Heart left ventricle (tissue), 16 donors: ENCODE measurements at regions of chr4 and their contacts with region 1.

Region 1: GRCh38 chr4:106502106-106502699 is 133.6 kb upstream of the GIMD1 start:
- DNase-seq: peak in 4 of 5 donors; percentile 27 to 46 (median 41)
- ATAC-seq: peak in 3 of 4 donors; percentile 62 to 69 (median 65)
- H3K4me3 ChIP-seq: no peak overlapping the region
- H3K27ac ChIP-seq: no peak overlapping the region
- H3K4me1 ChIP-seq: no peaks in the 10 kb centered on the region
- H3K27me3 ChIP-seq: peaks cover 0 to 5% (median 0%) of the 10 kb centered on the region in 9 donors
- CTCF ChIP-seq: peak; percentile 45 to 74 (median 58)
- POLR2A ChIP-seq: no peak

Region 2: GRCh38 chr4:106266201-106266600 is 236.0 kb before region 1 on chr4:
- intact Hi-C with region 1: loop called in 6 of 10 experiments (anchors 2 to 10 kb)
- DNase-seq: no peak
- ATAC-seq: no peak
- H3K4me3 ChIP-seq: no peak overlapping the region
- H3K27ac ChIP-seq: no peak overlapping the region
- H3K4me1 ChIP-seq: peaks cover 0 to 8% (median 0%) of the 10 kb centered on the region in 12 donors
- H3K27me3 ChIP-seq: no peaks in the 10 kb centered on the region
- CTCF ChIP-seq: peak; percentile 19 to 63 (median 36)
- POLR2A ChIP-seq: no peak

Region 3: GRCh38 chr4:106329041-106329618 is 173.1 kb before region 1 on chr4:
- intact Hi-C with region 1: loop called in 3 of 10 experiments (anchors 5 kb)
- DNase-seq: no peak
- ATAC-seq: peak; percentile 58 to 73 (median 66)
- H3K4me3 ChIP-seq: no peak overlapping the region
- H3K27ac ChIP-seq: no peak overlapping the region
- H3K4me1 ChIP-seq: peaks cover 0 to 2% (median 0%) of the 10 kb centered on the region in 12 donors
- H3K27me3 ChIP-seq: no peaks in the 10 kb centered on the region
- CTCF ChIP-seq: peak; percentile 43 to 67 (median 54)
- POLR2A ChIP-seq: no peak

Region 4: GRCh38 chr4:106369456-106370060 is 132.6 kb before region 1 on chr4:
- intact Hi-C with region 1: loop called in 9 of 10 experiments (anchors 2 to 10 kb)
- DNase-seq: no peak
- ATAC-seq: no peak
- H3K4me3 ChIP-seq: no peak overlapping the region
- H3K27ac ChIP-seq: no peak overlapping the region
- H3K4me1 ChIP-seq: peaks cover 0 to 19% (median 7%) of the 10 kb centered on the region in 12 donors
- H3K27me3 ChIP-seq: peaks cover 0 to 5% (median 0%) of the 10 kb centered on the region in 9 donors
- CTCF ChIP-seq: peak; percentile 36 to 72 (median 54)
- POLR2A ChIP-seq: no peak